ENCODE measurements at regions of chr11 and their contacts with region 1.

Region 1: DNA sequence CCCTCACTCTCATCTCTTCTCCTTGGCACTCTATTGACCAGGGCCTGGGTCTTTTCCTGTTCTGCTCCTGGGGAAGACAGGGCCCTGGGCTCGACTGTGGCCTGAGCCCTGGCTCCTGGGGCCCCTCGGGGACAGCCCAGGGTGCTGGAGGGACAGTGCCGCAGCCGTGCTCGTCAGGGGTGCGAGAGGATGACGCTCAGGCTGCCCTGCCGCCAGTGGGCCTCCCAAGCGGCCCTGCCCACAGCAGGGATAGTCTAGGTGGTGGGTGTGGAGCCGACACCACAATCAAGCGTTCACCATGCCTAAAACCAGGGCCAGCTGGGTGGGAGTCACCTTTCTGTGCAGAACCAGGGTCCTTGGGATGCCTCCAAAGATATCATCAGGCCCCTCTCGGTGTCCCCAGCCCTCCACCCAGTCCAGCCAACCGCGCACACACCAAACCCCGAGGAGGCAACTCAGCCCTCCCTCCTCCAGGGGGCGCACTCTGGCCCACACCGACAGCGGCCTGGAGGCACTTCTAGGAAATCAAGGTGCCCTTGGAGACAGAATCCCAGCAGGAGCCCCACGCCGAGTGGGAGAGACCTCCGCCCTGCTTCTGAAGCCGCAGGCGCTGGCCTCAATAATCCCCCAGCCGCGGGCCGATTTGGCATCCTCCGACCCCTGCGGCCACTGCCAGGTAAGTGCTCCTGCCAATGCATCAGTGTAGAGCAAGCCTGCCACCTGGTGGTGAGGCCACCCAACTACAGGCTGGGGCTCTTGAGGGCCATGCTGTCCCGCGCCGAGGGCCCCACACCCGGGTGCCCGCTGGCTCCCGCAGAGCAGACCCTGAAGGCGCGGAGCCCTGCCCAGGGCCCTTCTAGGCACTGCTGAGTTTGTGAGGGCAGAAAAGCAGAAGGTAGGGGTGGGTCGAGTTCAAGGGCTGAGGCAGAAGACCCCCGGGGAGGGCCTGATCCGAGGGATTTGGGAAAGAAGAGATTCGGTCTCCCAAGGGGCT is 496.4 kb downstream of the BUD13 start:
- DNase-seq: peak; percentile 62
- H3K4me3 ChIP-seq: no peak overlapping the region
- H3K27ac ChIP-seq: no peak overlapping the region
- H3K4me1 ChIP-seq: no peaks in the 10 kb centered on the region
- CTCF ChIP-seq: peak; percentile 90

Region 2: DNA sequence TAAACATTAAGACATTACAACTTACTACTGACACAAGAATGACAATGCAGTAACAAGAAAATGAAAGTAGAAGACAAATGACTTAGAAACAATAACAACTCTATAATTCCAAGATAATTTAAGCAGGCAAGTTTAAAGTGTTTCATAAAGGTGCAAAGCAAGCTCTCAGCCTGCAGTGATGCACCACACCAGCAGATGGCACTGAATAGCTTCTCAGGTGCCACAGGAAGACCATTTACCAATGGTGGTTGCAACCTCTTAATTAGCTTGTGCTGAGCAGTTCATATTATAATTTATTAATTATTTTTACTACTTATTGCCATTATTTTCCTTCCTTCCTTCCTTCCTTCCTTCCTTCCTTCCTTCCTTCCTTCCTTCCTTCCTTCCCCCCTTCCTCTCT is 1537.4 kb before region 1 on chr11:
- CTCF ChIA-PET with region 1: no interaction called
- POLR2A ChIA-PET with region 1: no interaction called
- intact Hi-C with region 1: loop called (anchors 5 kb)
- DNase-seq: peak; percentile 60
- H3K4me3 ChIP-seq: no peak overlapping the region
- H3K27ac ChIP-seq: no peak overlapping the region
- H3K4me1 ChIP-seq: no peaks in the 10 kb centered on the region
- CTCF ChIP-seq: peak; percentile 88

Region 3: DNA sequence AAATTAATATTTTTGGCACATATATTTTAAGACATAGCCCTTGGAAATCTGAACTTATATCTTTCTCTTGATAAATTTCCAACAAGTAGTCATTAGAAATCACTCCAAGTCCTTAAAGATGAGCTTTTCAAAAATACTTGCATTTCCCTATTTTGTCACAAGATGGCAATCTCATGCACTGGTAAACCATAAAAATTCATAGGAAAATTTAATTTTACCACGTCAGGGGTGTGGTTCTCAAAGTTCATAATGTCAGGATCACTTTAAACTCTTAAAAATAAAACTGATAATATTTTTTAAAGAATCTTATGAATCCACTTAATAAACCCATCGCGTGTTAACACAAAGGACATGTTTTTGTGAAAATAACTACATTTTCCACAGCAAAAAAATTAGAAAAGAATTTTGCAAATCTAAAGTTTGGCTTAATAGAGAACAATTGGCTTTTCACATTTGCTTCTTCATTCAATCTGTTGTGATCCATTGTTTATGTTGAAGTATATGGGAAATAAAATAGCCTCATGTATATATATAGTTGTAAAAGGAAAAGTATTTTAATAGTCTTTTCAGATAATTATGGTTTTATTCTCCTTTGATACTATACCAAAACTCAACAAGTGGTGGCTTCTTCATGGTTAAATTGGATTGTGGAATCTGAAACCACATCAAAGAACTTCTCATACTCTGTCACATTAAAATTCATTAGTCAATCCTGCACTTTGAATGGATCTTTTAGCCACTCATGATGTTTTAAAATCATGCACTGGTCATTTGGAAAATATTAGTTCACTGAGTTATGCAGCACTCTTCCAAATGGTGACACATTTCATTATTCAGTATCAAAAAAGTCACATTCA is 941.2 kb before region 1 on chr11:
- CTCF ChIA-PET with region 1: no interaction called
- POLR2A ChIA-PET with region 1: no interaction called
- intact Hi-C with region 1: loop called (anchors 5 kb)
- DNase-seq: peak; percentile 64
- H3K4me3 ChIP-seq: no peak overlapping the region
- H3K27ac ChIP-seq: no peak overlapping the region
- H3K4me1 ChIP-seq: no peaks in the 10 kb centered on the region
- CTCF ChIP-seq: peak; percentile 95

Measured in OCI-LY7 (cell line).